K562 (cell line): ENCODE measurements at regions of chr7 and their contacts with region 1.

Region 1: DNA sequence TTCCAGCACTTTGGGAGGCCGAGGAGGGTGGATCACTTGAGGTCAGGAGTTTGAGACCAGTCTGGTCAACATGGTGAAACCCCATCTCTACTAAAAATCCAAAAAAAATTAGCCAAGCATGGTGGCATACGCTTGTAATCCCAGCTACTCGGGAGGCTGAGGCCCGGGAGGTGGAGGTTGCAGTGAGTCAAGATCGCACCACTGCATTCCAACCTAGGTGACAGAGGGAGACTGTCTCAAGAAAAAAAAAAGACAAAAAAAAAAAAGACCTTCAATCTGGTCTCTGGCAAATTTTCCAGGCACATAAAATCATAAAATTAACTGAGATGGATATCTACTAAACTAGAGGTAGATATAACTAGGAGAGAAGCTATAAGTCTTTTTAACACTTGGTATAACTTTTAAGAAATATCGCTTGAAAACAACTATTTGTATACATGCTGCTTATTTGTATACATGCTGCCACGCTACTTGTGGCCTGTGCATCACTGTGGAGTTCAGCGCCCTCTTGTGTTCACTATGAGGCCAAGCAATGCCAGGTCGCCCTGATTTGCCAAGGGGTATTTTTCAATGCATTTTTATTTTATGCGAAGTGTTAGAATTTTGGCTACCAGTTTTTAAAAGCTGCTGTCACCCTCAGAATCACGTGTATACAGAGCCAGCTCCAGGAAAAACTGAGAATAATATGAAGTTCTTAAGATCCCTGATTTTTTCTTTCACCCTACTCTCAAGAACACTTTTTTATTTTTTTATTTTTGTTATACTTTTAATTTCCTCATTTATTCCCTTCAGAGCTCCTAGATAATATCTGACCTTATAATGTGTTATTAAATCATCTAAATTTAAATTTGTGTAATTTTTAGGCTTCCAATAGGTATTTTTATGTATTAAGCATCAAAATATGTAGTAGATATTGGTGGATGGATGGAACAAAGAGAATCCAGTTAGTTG is 26.7 kb downstream of the CYCS start:
- DNase-seq: peak; percentile 61 to 76 (median 71)
- ATAC-seq: peak; percentile 84
- H3K4me3 ChIP-seq: no peak overlapping the region
- H3K27ac ChIP-seq: no peak overlapping the region
- H3K4me1 ChIP-seq: peaks cover 2 to 3% of the 10 kb centered on the region in 2 experiments; a peak in 3 of 5 replicates
- H3K27me3 ChIP-seq: no peaks in the 10 kb centered on the region
- CTCF ChIP-seq: peak; percentile 87 to 92 (median 91)
- EP300 ChIP-seq: no peak
- POLR2A ChIP-seq: no peak
- RAD21 ChIP-seq: peak; percentile 77 to 89

Region 2: GRCh38 chr7:24290004-24290641 is 808.2 kb before region 1 on chr7:
- CTCF ChIA-PET with region 1: no interaction called
- POLR2A ChIA-PET with region 1: no interaction called
- in situ Hi-C with region 1: no loop called
- intact Hi-C with region 1: loop called (anchors 2 kb)
- DNase-seq: peak; percentile 16 to 72 (median 32)
- ATAC-seq: peak; percentile 95
- H3K4me3 ChIP-seq: no peak overlapping the region
- H3K27ac ChIP-seq: no peak overlapping the region
- H3K4me1 ChIP-seq: no peaks in the 10 kb centered on the region; a peak in 1 of 5 replicates
- H3K27me3 ChIP-seq: peaks cover 2 to 7% of the 10 kb centered on the region in 2 experiments; a peak in 4 of 5 replicates
- CTCF ChIP-seq: peak; percentile 62 to 63 (median 63)
- EP300 ChIP-seq: no peak
- POLR2A ChIP-seq: no peak
- RAD21 ChIP-seq: peak; percentile 59 to 70

Region 3: DNA sequence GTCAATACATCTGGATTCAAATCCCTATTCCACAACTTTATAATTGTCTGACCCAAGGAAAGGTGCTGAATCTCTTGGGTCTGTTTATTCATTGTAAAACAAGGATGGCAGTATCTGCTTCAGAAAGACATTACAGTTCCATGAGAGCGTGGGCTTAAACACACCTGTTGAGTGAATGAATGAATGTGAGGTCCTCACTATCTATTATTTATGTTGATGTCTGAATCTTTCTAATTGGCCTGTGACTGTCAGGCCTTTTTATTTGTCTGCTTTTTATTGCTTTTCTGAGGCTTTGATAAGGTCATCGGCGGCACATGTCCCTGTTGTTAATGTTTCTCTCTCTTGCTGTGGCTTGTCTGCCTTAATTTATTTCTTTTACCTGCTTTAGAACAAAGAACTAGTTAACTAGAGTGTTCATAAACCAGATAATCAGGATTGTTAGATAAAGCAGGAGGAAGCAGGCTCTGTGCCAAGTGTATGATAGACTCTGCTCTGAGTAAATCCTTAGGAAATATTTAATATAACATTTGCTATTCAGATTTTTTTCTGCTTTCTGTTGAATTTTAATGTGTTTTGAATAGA is 69.0 kb after region 1 on chr7:
- CTCF ChIA-PET with region 1: interaction called, 3 read pairs
- POLR2A ChIA-PET with region 1: no interaction called
- in situ Hi-C with region 1: no loop called
- intact Hi-C with region 1: loop called (anchors 5 kb)
- DNase-seq: no peak
- ATAC-seq: no peak
- H3K4me3 ChIP-seq: no peak overlapping the region
- H3K27ac ChIP-seq: no peak overlapping the region
- H3K4me1 ChIP-seq: no peaks in the 10 kb centered on the region
- H3K27me3 ChIP-seq: no peaks in the 10 kb centered on the region
- CTCF ChIP-seq: no peak
- EP300 ChIP-seq: no peak
- POLR2A ChIP-seq: no peak
- RAD21 ChIP-seq: no peak